OCI-LY7 (cell line): ENCODE measurements at regions of chr7 and their contacts with region 1.

Region 1: DNA sequence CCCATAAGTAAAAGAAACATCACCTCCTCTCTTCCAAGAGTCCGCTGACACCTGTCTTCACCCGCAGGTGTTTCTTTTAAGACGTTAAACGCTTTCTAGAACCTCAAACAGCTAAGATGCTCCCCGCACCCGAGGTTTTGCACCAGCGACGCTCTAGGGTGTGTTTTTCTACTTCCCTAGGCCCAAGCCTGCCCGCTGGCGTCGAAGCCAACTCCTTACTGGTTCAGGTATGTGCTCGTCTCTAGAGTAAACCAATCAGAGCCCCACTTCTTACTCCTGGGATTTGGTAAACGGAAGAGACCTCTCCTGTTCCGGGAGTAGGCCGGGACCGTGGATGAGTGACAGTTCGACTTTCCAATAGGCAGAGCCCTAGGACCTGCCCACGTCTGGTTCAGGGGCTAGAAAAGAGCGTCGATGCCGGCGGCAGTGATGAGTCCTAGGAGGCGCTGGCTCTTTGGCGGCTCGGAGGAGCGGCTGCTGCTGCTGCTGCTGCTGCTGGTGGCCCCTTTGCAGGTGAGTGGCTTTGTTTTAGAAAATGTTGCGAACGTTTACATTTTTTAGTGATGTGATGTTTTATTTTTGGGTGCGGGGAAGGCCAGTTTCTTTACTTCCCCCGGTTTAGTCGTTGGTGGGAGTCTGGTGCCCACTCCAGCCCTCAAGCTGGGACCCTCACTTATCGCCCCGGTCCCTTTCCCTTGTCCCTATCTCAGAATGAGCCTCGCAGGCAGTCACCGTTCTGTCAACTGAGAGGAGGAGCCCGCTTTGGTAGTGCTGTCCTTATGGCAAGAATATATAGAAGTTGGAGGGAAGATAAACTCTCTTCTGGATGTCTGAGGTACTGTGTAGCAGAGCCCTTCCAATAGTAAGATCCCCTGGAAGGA is at the start of gene BPGM:
- DNase-seq: peak; percentile 99
- H3K4me3 ChIP-seq: peak within 1 kb of the TSS; percentile 90
- H3K27ac ChIP-seq: peak within 1 kb of the TSS; percentile 76
- H3K4me1 ChIP-seq: peaks cover 39% of the 10 kb centered on the region
- CTCF ChIP-seq: peak; percentile 63
- total RNA-seq, gene BPGM: 18.7 and 23.5 TPM in 2 replicates

Region 2: DNA sequence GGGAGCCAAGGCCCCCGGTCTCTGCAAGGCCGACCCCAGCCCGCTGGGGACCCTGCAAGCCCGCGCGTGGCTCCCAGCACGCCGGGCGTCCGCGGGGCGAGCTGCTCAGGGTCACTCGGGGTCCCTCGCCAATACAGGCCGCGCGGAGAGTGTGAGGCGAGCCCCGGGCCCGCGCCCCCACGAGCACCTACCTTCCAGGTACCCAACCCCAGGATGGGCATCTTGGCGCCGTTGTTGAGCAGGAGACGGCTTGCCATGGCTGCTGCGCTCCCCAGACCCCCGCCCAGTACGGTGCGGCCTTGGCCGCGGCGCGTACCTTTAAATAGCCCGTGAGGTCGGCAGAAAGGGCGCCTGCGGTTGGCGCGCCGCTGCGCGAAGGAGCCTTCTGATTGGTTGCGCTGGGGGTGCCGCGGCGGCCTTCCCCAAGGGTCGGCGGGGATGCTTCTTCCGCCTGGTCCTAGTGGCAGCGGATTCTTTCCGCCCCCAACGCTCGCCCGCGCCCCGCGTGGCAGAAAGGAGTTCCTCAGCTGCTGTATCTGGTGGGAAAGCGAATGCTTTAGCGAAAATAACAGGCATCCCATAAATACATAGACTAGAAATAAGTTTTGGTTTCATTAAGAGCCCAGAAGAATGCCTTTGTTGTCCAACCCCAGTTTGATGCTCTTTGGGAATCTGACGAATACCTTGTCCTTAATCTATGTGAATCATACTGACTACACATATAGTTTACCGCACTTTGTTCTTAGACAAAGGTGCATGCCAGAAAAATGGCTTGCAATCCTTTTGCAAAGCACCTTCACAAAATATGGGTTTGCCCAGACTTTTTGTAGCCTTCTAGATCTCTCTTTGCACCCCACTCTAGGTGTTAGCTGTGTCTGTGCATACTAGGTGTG is 187.6 kb before region 1 on chr7 and contains the start of gene AKR1B1:
- CTCF ChIA-PET with region 1: no interaction called
- POLR2A ChIA-PET with region 1: interaction called, 3 read pairs
- intact Hi-C with region 1: loop called (anchors 5 kb)
- DNase-seq: peak; percentile 96
- H3K4me3 ChIP-seq: peak within 1 kb of the TSS; percentile 96
- H3K27ac ChIP-seq: peak within 1 kb of the TSS; percentile 57
- H3K4me1 ChIP-seq: peaks cover 29% of the 10 kb centered on the region
- CTCF ChIP-seq: peak; percentile 77
- total RNA-seq, gene AKR1B1: 66.4 and 75.7 TPM in 2 replicates

Region 3: GRCh38 chr7:134502463-134503371 is 143.9 kb before region 1 on chr7:
- CTCF ChIA-PET with region 1: no interaction called
- POLR2A ChIA-PET with region 1: no interaction called
- intact Hi-C with region 1: no loop called
- DNase-seq: no peak
- H3K4me3 ChIP-seq: no peak overlapping the region
- H3K27ac ChIP-seq: no peak overlapping the region
- H3K4me1 ChIP-seq: no peaks in the 10 kb centered on the region
- CTCF ChIP-seq: no peak

Region 4: DNA sequence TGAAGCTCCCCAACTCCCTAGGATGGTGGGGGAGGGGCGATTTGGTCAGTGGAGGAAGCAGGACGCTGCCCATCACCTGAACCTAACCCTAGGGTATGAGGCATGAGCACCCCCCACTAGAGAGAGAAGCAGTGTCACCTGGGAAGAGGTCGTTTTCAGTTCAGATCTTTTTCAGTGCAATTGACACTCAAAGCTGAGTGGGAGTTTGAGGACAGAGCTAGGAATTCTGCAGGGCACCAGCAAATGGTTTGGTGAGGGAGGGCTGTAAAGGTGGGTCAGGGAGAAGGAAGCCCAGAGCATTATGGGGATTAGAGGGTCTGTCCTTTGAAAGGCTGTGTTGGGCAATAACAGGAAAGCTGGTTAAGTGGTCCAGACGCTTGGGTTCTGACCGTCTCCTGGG is 10.9 kb after region 1 on chr7:
- CTCF ChIA-PET with region 1: interaction called, 7 read pairs
- POLR2A ChIA-PET with region 1: interaction called, 20 read pairs
- intact Hi-C with region 1: no loop called
- DNase-seq: no peak
- H3K4me3 ChIP-seq: no peak overlapping the region
- H3K27ac ChIP-seq: no peak overlapping the region
- H3K4me1 ChIP-seq: no peaks in the 10 kb centered on the region
- CTCF ChIP-seq: no peak

Region 5: GRCh38 chr7:134766779-134767519 is 120.3 kb after region 1 on chr7:
- CTCF ChIA-PET with region 1: no interaction called
- POLR2A ChIA-PET with region 1: interaction called, 13 read pairs
- intact Hi-C with region 1: loop called (anchors 5 kb)
- DNase-seq: peak; percentile 77
- H3K4me3 ChIP-seq: peak overlapping the region; percentile 12
- H3K27ac ChIP-seq: peak overlapping the region; percentile 57
- H3K4me1 ChIP-seq: peaks cover 21% of the 10 kb centered on the region
- CTCF ChIP-seq: no peak

Region 6: GRCh38 chr7:135170274-135170997 is 523.8 kb after region 1 on chr7 and contains the start of gene CYREN:
- CTCF ChIA-PET with region 1: no interaction called
- POLR2A ChIA-PET with region 1: interaction called, 9 read pairs
- intact Hi-C with region 1: loop called (anchors 2 kb)
- DNase-seq: peak; percentile 96
- H3K4me3 ChIP-seq: peak within 1 kb of the TSS; percentile 76
- H3K27ac ChIP-seq: peak within 1 kb of the TSS; percentile 82
- H3K4me1 ChIP-seq: peaks cover 32% of the 10 kb centered on the region
- CTCF ChIP-seq: peak; percentile 80
- total RNA-seq, gene CYREN: 64.0 and 69.4 TPM in 2 replicates

Region 7: GRCh38 chr7:136359333-136359903 is 1712.8 kb after region 1 on chr7:
- CTCF ChIA-PET with region 1: no interaction called
- POLR2A ChIA-PET with region 1: no interaction called
- intact Hi-C with region 1: loop called (anchors 10 kb)
- DNase-seq: peak; percentile 95
- H3K4me3 ChIP-seq: peak overlapping the region; percentile 49
- H3K27ac ChIP-seq: peak overlapping the region; percentile 100
- H3K4me1 ChIP-seq: peaks cover 79% of the 10 kb centered on the region
- CTCF ChIP-seq: 0 out of 2 replicates have a peak, but pooled peaks have one; percentile 25